ENCODE measurements at regions of chr7 and their contacts with region 1.

Region 1: GRCh38 chr7:101815835-101816493 is 1.5 kb upstream of the CUX1 start:
- DNase-seq: peak; percentile 64
- H3K4me3 Mint-ChIP-seq: peak overlapping the region; percentile 81
- H3K27ac Mint-ChIP-seq: peak overlapping the region; percentile 73
- H3K4me1 Mint-ChIP-seq: peaks cover 17% of the 10 kb centered on the region
- H3K27me3 Mint-ChIP-seq: peaks cover 37% of the 10 kb centered on the region

Region 2: GRCh38 chr7:101232141-101232850 is 583.7 kb before region 1 on chr7:
- intact Hi-C with region 1: no loop called
- DNase-seq: no peak
- H3K4me3 Mint-ChIP-seq: no peak overlapping the region
- H3K27ac Mint-ChIP-seq: no peak overlapping the region
- H3K4me1 Mint-ChIP-seq: no peaks in the 10 kb centered on the region
- H3K27me3 Mint-ChIP-seq: no peaks in the 10 kb centered on the region

Region 3: GRCh38 chr7:101602484-101603241 is 213.3 kb before region 1 on chr7:
- intact Hi-C with region 1: loop called (anchors 5 kb)
- DNase-seq: peak; percentile 44
- H3K4me3 Mint-ChIP-seq: no peak overlapping the region
- H3K27ac Mint-ChIP-seq: no peak overlapping the region
- H3K4me1 Mint-ChIP-seq: no peaks in the 10 kb centered on the region
- H3K27me3 Mint-ChIP-seq: no peaks in the 10 kb centered on the region

Region 4: DNA sequence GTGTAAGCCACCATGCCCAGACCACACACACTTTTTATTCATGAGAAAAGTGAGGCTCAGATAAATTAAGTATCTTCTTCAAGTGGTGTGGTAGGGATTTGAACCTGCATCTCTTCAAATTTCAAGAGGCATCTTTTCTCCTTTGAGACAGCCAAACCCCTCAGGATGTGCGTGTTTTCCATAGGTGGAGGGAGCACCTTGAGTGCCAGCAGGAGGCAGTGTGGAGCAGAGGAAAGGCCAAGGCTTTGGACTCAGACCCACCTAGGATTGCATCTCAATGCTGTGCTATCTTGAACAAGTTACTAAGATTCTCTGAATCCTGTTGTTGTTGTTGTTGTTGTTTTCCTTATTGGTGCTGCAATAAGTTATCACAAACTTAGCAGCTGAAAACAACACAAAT is 146.7 kb before region 1 on chr7:
- intact Hi-C with region 1: no loop called
- DNase-seq: no peak
- H3K4me3 Mint-ChIP-seq: no peak overlapping the region
- H3K27ac Mint-ChIP-seq: no peak overlapping the region
- H3K4me1 Mint-ChIP-seq: no peaks in the 10 kb centered on the region
- H3K27me3 Mint-ChIP-seq: peaks cover 2% of the 10 kb centered on the region

Region 5: DNA sequence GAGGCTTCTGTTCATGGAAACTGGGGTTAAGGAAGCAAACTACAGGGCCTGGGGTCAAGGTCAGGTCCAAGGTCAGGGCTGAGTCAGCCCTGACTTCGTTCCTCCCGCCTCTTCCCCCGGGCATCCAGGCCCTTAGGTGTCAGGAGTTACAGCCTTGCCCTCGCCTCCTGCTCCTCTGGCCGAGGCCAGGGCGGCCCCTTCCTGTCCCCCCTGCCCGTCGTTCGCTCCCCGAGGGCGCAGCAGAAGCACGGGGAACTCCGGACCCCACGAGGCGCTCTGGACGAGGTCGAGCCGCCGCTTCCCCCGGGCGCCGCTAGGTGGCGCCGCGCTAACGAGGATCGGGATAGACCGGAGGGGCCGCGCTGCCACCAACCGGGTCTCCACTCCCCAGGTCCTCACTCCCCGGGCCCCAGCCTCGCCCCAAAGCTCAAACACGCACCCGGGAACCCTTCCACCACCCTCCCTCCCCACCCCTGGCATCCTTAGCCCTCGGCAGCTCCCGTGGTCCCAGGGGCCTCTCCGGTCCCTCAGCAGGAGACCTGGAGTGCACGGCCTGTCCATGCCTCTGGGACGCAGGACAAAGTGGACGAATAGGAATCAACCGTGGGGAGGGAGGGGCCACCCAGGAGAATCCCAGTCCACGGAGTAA is 127.7 kb before region 1 on chr7:
- intact Hi-C with region 1: loop called (anchors 1 kb)
- DNase-seq: peak; percentile 67
- H3K4me3 Mint-ChIP-seq: no peak overlapping the region
- H3K27ac Mint-ChIP-seq: no peak overlapping the region
- H3K4me1 Mint-ChIP-seq: peaks cover 6% of the 10 kb centered on the region
- H3K27me3 Mint-ChIP-seq: peaks cover 5% of the 10 kb centered on the region

Region 6: GRCh38 chr7:101743241-101743994 is 72.5 kb before region 1 on chr7:
- intact Hi-C with region 1: loop called (anchors 1 kb)
- DNase-seq: peak; percentile 61
- H3K4me3 Mint-ChIP-seq: peak overlapping the region; percentile 77
- H3K27ac Mint-ChIP-seq: no peak overlapping the region
- H3K4me1 Mint-ChIP-seq: peaks cover 31% of the 10 kb centered on the region
- H3K27me3 Mint-ChIP-seq: no peaks in the 10 kb centered on the region

Region 7: DNA sequence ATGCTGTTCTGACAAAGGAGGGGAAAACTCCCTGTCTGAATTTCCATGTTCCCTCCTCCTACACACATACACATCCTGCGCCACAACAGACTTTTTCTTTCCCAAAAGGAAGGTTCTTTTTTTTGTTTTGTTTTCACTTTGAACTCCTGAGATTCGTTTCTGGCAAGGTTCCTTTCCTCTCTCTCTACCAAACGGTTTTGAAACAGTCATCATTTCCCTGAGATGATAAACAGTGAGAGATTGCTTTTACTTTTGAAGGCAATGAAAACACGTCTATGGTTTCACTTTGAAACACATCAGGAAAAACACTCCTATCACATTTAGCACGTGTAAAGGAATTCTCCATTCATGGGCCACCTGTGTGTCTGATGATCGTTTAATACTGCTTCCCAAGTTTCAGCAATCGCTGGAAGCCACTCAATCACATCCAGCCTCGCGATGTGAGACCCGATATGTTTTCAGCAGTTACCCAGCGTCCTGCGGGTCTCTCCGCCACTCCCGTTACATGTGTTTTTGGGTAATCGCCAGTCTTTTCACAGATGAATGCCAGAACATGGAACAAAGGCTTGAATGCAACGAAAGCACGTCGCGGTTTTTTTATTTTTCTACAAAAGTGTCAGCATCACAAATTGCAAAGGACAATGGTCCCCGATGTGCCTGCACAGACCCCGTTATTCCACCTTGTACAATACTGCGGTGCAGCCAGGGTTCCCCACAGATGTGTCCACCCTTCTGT is 61.4 kb before region 1 on chr7:
- intact Hi-C with region 1: loop called (anchors 2 kb)
- DNase-seq: no peak
- H3K4me3 Mint-ChIP-seq: peak overlapping the region; percentile 84
- H3K27ac Mint-ChIP-seq: peak overlapping the region; percentile 78
- H3K4me1 Mint-ChIP-seq: peaks cover 15% of the 10 kb centered on the region
- H3K27me3 Mint-ChIP-seq: no peaks in the 10 kb centered on the region

Region 8: GRCh38 chr7:101856473-101857357 is 40.8 kb after region 1 on chr7:
- intact Hi-C with region 1: loop called (anchors 1 kb)
- DNase-seq: peak; percentile 72
- H3K4me3 Mint-ChIP-seq: peak overlapping the region; percentile 89
- H3K27ac Mint-ChIP-seq: peak overlapping the region; percentile 94
- H3K4me1 Mint-ChIP-seq: peaks cover 49% of the 10 kb centered on the region
- H3K27me3 Mint-ChIP-seq: peaks cover 2% of the 10 kb centered on the region

Region 9: GRCh38 chr7:102236592-102237287 is 420.8 kb after region 1 on chr7:
- intact Hi-C with region 1: loop called (anchors 2 kb)
- DNase-seq: peak; percentile 22
- H3K4me3 Mint-ChIP-seq: no peak overlapping the region
- H3K27ac Mint-ChIP-seq: no peak overlapping the region
- H3K4me1 Mint-ChIP-seq: no peaks in the 10 kb centered on the region
- H3K27me3 Mint-ChIP-seq: no peaks in the 10 kb centered on the region